Posterior vena cava (tissue), 2 donors: ENCODE measurements at regions of chr14 and their contacts with region 1.

Region 1: DNA sequence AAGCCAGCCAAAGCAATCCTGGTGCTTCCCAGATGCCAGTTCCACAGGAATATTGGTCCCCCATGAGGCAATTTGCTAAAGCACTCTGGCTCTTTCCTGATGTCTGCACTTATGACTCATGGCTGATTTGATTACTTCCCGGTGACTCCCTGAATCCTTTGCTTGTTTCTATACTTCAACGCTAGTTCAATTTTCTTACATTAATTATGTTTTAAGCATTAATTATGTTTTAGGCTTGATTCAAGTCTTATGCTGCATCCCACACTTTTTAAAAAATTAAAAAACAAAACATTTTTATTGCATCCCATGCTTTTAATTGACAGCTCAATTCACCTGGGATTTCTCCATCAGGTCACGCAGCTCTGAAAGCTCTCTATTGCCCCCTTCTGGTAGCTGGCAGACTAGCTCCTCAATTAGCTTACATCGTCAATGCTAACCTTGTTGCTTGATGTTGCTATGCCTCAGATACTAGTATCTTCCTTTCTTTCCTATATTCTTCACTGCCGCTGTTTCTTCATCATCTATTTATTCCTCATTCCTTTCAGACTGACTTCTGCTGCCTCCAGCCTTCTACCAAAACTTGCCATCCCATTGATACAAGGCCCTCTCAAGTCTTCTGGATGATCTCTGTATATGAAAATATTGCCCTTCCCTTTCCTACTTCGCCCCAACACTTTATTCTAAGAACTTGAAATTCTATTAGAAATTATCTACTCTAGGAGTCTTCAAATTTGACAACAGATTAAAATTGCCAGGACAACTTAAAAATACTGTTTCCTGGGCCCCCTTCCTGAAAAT is 32.0 kb downstream of the TSHR start:
- DNase-seq: no peak

Region 2: GRCh38 chr14:80954687-80955299 is 32.6 kb before region 1 on chr14:
- intact Hi-C with region 1: loop called in 1 of 2 experiments (anchors 2 kb)
- DNase-seq: peak; percentile 92

Region 3: GRCh38 chr14:81051547-81051946 is 64.1 kb after region 1 on chr14:
- intact Hi-C with region 1: no loop called
- DNase-seq: no peak

Region 4: DNA sequence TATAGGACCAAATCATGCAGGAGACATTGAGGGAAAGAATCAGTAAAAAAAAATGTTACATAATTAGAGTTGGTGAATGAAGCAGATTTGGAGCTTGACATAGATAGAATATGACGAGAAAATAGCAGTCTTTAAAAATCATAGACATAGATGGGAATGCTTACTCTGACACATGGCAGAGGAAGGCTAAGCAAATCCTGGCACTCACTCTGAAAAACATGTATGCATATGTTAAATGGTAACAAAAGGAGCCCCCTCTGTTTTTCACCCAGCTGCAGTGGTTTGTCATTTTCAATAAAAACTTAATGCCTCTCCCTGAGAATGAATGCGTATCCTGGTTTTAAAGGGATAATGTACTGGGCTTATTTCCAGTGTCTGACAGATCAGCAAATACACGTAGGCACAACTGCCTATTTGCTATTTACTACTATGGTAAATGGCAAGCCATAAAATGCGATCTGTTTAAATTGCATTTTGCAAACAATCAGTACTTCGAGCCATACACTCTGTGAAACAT is 1107.5 kb after region 1 on chr14:
- intact Hi-C with region 1: loop called in 1 of 2 experiments (anchors 10 kb)
- DNase-seq: no peak